Activated B cell treated with CpG ODN at 0.5 μM for 24 hours (primary cell): ENCODE measurements at regions of chr4 and their contacts with region 1.

Region 1: GRCh38 chr4:26787461-26788340 is 72.9 kb upstream of the STIM2 start:
- DNase-seq: no peak
- ATAC-seq: peak; percentile 63
- H3K4me3 Mint-ChIP-seq: peak overlapping the region; percentile 13
- H3K27ac Mint-ChIP-seq: peak overlapping the region; percentile 32
- H3K4me1 Mint-ChIP-seq: peaks cover 37% of the 10 kb centered on the region
- H3K27me3 Mint-ChIP-seq: peaks cover 2% of the 10 kb centered on the region
- CTCF ChIP-seq: no peak

Region 2: DNA sequence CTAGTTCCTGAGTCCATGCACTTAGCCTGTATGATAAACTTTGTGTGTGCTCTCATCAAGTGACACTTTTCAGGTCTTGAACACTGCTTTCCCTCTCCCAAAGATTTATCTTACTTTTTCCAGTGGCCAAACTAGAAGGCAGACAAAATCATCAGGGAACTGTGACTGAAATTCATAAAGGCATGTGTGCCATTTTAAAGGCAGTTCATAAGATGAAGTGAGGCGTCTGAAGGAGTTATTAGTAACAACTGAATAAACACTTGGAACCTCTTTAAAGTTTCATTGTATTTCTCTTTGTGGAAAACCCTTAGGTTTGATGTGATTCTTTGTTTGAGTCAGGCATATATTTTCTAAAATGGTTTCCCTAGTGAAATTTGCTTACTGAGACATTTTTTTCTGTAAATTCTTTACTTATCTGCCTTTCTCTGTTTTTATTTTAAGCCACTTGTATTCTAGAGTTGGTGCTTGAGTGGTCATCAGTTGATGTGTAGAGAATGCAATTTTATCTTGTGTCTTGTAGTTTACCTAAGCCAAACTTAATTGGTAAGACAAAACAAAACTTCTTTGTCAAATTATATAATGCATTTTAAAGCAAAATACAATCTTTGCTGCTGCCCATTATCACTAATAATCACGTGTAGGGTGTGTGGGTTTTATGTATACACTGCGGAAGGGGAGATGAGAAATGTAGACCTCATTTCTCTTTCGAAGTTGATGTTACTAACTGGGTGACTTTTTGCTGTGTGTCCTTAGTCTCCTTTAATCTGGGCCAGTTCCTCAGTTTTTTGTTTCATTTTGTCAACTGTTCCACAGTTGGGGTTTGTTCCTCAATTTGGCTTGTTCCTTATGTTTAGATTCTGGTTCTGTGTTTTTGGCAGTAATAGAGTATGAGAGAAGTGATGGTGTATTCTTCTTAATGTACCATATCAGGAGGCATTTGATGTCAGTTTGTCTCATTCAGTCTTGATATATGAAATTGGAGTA is 410.1 kb before region 1 on chr4:
- CTCF ChIA-PET with region 1: no interaction called
- POLR2A ChIA-PET with region 1: no interaction called
- intact Hi-C with region 1: no loop called
- DNase-seq: no peak
- ATAC-seq: no peak
- H3K4me3 Mint-ChIP-seq: no peak overlapping the region
- H3K27ac Mint-ChIP-seq: no peak overlapping the region
- H3K4me1 Mint-ChIP-seq: peaks cover 51% of the 10 kb centered on the region
- H3K27me3 Mint-ChIP-seq: no peaks in the 10 kb centered on the region
- CTCF ChIP-seq: no peak

Region 3: DNA sequence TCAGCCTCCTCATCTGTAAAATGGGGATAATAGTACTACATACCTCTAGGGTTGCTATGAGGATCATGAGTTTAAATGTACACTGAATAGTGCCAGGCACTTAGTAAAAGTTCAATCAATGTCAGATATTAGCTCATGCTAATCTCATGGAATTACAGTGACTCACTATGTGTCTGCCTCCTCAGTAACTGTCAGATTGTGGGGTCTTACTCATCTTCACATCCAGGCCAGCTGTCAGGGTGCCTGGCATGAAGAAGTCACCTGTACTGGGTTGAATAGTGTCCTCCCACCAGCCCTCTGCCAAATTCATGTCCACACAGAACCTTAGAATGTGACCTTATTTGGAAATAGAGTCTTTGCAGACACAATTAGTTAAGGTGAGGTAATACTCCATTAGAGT is 18.6 kb after region 1 on chr4:
- CTCF ChIA-PET with region 1: no interaction called
- POLR2A ChIA-PET with region 1: no interaction called
- intact Hi-C with region 1: loop called (anchors 2 kb)
- DNase-seq: no peak
- ATAC-seq: no peak
- H3K4me3 Mint-ChIP-seq: no peak overlapping the region
- H3K27ac Mint-ChIP-seq: no peak overlapping the region
- H3K4me1 Mint-ChIP-seq: peaks cover 33% of the 10 kb centered on the region
- H3K27me3 Mint-ChIP-seq: peaks cover 16% of the 10 kb centered on the region
- CTCF ChIP-seq: no peak

Region 4: DNA sequence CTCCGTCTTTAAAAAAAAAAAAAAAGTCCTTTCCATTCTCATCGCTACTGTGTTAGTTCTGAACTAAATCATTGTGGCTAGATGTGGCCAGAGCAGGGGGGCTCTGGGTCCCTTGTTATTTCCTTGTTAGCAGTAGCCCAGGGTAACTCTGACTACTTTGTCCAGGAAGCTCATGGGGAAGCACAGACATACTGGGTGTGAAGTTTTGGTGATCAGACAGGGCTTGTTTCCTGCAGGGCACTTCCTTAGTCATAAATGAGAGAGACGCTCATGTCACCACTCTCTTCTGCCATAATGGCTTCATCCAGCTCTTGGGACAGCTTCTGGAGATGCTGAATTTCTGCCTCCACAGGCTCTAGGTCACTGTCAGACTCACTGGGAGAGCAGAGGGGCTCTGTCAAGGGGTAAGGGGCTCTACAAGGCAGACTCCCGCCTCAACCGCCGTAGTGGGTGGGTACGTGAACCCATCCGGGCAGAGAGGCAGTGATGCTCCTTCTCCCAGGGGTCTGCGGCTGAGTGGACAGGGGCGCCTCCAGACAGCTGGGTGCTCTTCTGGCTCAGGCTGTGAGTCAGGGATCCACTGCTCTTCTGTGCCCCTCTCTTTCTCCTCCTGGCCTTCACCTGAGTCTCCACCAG is 85.8 kb after region 1 on chr4:
- CTCF ChIA-PET with region 1: no interaction called
- POLR2A ChIA-PET with region 1: no interaction called
- intact Hi-C with region 1: no loop called
- DNase-seq: no peak
- ATAC-seq: peak; percentile 87
- H3K4me3 Mint-ChIP-seq: peak overlapping the region; percentile 64
- H3K27ac Mint-ChIP-seq: peak overlapping the region; percentile 85
- H3K4me1 Mint-ChIP-seq: peaks cover 82% of the 10 kb centered on the region
- H3K27me3 Mint-ChIP-seq: no peaks in the 10 kb centered on the region
- CTCF ChIP-seq: no peak